Ovary (tissue), 10 donors: ENCODE measurements at regions of chr2 and their contacts with region 1.

Region 1: GRCh38 chr2:154381931-154382794 is 316.3 kb upstream of the KCNJ3 start:
- DNase-seq: no peak
- H3K4me3 ChIP-seq: no peak overlapping the region
- H3K27ac ChIP-seq: no peak overlapping the region
- H3K4me1 ChIP-seq: no peaks in the 10 kb centered on the region
- H3K27me3 ChIP-seq: no peaks in the 10 kb centered on the region
- CTCF ChIP-seq: no peak
- EP300 ChIP-seq: no peak
- POLR2A ChIP-seq: no peak

Region 2: DNA sequence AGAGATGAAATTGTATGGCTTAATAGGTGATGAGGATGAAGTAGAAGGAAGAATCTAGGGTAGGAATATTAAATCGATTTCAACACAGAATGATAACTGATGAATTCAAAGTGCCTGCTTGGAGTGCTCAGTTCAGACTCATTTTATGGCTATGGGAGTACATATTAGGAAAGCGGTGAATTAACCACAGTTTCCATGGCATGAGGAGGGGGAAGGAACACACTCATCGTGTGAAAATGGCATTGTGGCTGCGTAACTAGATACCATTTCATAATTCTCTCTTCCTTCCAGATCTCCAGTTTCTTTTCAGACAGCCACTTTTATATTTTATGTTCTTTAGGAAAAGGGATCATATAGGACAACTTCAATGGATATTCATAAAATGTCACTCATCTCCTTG is 84.1 kb after region 1 on chr2:
- intact Hi-C with region 1: no loop called
- DNase-seq: no peak
- H3K4me3 ChIP-seq: no peak overlapping the region
- H3K27ac ChIP-seq: no peak overlapping the region
- H3K4me1 ChIP-seq: no peaks in the 10 kb centered on the region
- H3K27me3 ChIP-seq: peaks cover 2% of the 10 kb centered on the region
- CTCF ChIP-seq: no peak
- EP300 ChIP-seq: no peak
- POLR2A ChIP-seq: no peak

Region 3: GRCh38 chr2:155947069-155947468 is 1564.9 kb after region 1 on chr2:
- intact Hi-C with region 1: loop called in 1 of 4 experiments (anchors 5 kb)
- DNase-seq: no peak
- H3K4me3 ChIP-seq: no peak overlapping the region
- H3K27ac ChIP-seq: no peak overlapping the region
- H3K4me1 ChIP-seq: no peaks in the 10 kb centered on the region
- H3K27me3 ChIP-seq: no peaks in the 10 kb centered on the region
- CTCF ChIP-seq: no peak
- EP300 ChIP-seq: no peak
- POLR2A ChIP-seq: no peak